Pancreas (tissue), 10 donors: ENCODE measurements at regions of chr15 and their contacts with region 1.

Region 1: DNA sequence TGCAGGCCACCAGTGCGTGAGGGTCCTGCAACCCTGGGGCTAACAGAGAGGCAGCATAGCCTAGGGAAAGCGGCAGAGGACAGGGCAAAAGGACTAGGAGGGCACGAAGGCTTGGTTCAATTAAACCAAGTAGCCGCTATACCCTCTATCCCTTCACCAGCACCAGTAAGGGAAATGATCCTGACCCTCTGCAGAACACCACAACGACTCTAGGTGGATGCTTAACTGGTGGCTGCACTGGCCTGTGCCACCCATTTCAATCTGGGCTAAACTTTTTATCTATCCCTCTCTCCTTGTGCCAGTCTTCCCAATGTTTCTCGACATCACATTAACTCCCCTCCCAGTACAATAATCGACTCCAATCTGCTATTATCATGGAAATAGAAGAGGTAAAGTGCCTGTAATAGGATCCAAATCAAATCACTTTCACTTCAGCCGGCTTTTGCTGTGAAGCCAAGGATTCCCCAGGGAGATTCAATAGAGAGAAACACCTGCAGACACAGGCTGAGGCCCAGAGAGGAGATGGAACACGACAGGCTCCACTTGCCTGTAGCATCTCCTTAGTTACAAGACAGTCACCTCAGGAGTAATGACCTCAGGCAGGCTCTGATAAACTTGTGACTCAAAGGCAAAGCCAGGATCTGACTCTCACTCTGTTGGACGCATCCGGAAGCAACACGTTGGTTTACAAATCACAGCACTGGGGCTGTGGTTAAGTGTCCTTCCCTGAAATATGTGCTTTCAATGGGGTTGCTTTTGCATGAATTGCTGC is 791.6 kb upstream of the ARRDC4 start:
- DNase-seq: no peak
- ATAC-seq: no peak
- H3K4me3 ChIP-seq: no peak overlapping the region
- H3K27ac ChIP-seq: no peak overlapping the region
- H3K4me1 ChIP-seq: no peaks in the 10 kb centered on the region
- H3K27me3 ChIP-seq: no peaks in the 10 kb centered on the region
- CTCF ChIP-seq: no peak

Region 2: GRCh38 chr15:97224191-97224641 is 55.3 kb after region 1 on chr15:
- intact Hi-C with region 1: loop called in 1 of 3 experiments (anchors 10 kb)
- DNase-seq: peak in 1 of 6 donors; percentile 38
- ATAC-seq: no peak
- H3K4me3 ChIP-seq: no peak overlapping the region
- H3K27ac ChIP-seq: no peak overlapping the region
- H3K4me1 ChIP-seq: no peaks in the 10 kb centered on the region
- H3K27me3 ChIP-seq: peaks cover 0 to 3% (median 0%) of the 10 kb centered on the region in 4 donors
- CTCF ChIP-seq: no peak